OCI-LY7 (cell line): ENCODE measurements at regions of chr9 and their contacts with region 1.

Region 1: GRCh38 chr9:78196258-78196657 is 39.6 kb upstream of the CEP78 start:
- DNase-seq: peak; percentile 81
- H3K4me3 ChIP-seq: peak overlapping the region; percentile 53
- H3K27ac ChIP-seq: peak overlapping the region; percentile 95
- H3K4me1 ChIP-seq: peaks cover 58% of the 10 kb centered on the region
- CTCF ChIP-seq: no peak

Region 2: DNA sequence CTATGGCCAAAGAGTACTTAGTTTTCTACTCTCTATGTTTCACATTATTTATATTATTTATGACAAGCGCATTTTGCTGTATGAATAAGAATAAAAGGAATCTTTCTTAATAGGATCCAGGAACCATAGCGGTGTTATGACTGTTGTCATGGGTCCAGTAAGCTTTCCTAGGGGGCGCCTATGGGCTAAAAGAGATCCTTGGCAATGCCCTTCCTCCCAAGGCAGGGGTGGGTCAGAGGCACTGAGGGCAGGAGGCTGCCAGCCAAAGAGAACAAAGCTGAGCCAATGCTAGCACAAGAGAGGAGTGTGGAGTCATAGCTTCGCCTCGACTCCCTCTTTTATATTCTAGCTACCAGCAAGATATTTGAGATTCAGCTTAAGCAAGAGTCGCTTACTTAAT is 66.3 kb before region 1 on chr9:
- CTCF ChIA-PET with region 1: no interaction called
- POLR2A ChIA-PET with region 1: interaction called, 3 read pairs
- intact Hi-C with region 1: loop called (anchors 5 kb)
- DNase-seq: peak; percentile 40
- H3K4me3 ChIP-seq: no peak overlapping the region
- H3K27ac ChIP-seq: no peak overlapping the region
- H3K4me1 ChIP-seq: peaks cover 19% of the 10 kb centered on the region
- CTCF ChIP-seq: peak; percentile 73

Region 3: GRCh38 chr9:78171651-78172050 is 24.6 kb before region 1 on chr9:
- CTCF ChIA-PET with region 1: no interaction called
- POLR2A ChIA-PET with region 1: interaction called, 9 read pairs
- intact Hi-C with region 1: loop called (anchors 2 kb)
- DNase-seq: no peak
- H3K4me3 ChIP-seq: no peak overlapping the region
- H3K27ac ChIP-seq: no peak overlapping the region
- H3K4me1 ChIP-seq: no peaks in the 10 kb centered on the region
- CTCF ChIP-seq: no peak

Region 4: GRCh38 chr9:78213712-78214111 is 17.5 kb after region 1 on chr9:
- CTCF ChIA-PET with region 1: interaction called, 7 read pairs
- POLR2A ChIA-PET with region 1: interaction called, 31 read pairs
- intact Hi-C with region 1: loop called (anchors 2 kb)
- DNase-seq: peak; percentile 57
- H3K4me3 ChIP-seq: no peak overlapping the region
- H3K27ac ChIP-seq: no peak overlapping the region
- H3K4me1 ChIP-seq: peaks cover 54% of the 10 kb centered on the region
- CTCF ChIP-seq: peak; percentile 81

Region 5: DNA sequence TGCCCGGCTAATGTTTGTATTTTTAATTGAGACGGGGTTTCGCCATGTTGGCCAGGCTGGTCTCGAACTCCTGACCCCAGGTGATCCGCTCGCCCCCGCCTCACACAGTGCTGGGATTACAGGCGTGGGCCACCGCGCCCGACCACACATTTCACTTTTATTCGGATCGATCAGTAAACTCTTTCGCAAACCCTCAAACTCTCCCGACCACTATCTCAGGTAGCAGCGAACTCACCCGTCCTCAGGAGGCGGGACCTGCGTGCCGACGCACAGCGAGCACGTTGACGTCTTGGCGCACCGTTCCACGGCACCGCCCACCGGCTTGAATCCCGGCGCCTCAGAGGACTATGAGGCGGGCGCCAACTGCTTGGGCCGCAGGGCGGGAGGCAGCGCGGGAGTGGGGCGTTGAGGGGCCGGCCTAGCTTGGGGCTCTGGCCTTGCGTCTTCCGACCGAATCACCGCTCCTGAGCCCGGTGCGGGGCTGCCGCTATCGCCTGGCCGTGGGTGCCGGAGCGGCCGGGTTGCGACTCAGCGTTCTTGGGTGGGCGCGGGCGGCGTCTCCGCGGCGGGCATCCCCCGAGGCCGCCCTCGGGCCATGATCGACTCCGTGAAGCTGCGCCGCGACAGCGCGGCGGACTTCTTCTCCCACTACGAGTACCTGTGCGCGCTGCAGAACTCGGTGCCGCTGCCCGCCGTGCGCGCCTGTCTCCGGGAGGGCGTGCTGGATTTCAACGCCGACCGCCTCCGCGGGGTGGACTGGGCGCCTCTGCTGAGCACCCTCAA is 39.7 kb after region 1 on chr9 and contains the start of gene CEP78:
- CTCF ChIA-PET with region 1: no interaction called
- POLR2A ChIA-PET with region 1: interaction called, 5 read pairs
- intact Hi-C with region 1: loop called (anchors 1 kb)
- DNase-seq: peak; percentile 95
- H3K4me3 ChIP-seq: peak within 1 kb of the TSS; percentile 83
- H3K27ac ChIP-seq: peak within 1 kb of the TSS; percentile 56
- H3K4me1 ChIP-seq: peaks cover 33% of the 10 kb centered on the region
- CTCF ChIP-seq: no peak
- total RNA-seq, gene CEP78: 59.3 and 65.1 TPM in 2 replicates

Region 6: DNA sequence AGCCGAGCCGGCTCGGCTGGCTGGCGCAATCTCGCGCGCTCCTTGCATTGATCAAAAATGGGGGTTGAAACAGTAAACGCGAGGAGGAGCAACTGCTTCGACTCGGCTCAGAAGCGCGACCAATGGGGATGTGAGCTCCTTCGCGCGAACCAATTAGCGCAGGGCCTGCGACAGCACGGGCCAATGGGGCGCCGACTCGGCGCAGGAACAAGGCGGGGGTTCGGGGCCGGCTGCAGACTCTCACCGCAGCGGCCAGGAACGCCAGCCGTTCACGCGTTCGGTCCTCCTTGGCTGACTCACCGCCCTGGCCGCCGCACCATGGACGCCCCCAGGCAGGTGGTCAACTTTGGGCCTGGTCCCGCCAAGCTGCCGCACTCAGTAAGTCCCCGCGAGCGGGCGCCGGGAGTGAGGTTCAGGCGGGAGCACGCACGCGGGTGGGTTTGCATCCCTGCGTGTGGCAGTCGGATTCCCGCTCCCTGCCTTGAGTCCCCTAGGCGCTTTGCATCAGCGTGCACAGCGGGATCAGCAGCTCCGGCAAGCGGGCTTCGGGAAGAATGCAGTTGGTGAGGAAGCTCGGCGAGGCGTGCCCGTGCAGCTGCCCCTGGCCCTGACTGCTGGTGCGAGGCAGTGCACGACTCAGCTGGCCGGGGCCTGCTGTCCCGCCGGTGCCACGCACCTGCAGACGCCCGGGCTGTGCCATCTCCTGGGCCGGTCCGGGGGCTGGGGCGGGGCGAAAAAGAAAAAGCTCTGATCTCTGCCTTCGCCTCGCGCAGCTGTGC is 100.8 kb after region 1 on chr9 and contains the start of gene PSAT1:
- CTCF ChIA-PET with region 1: no interaction called
- POLR2A ChIA-PET with region 1: interaction called, 16 read pairs
- intact Hi-C with region 1: loop called (anchors 2 kb)
- DNase-seq: peak; percentile 98
- H3K4me3 ChIP-seq: peak within 1 kb of the TSS; percentile 85
- H3K27ac ChIP-seq: peak within 1 kb of the TSS; percentile 84
- H3K4me1 ChIP-seq: peaks cover 22% of the 10 kb centered on the region
- CTCF ChIP-seq: peak; percentile 34; the same call in 1 of the 2 replicates
- total RNA-seq, gene PSAT1: 116 and 125 TPM in 2 replicates

Region 7: DNA sequence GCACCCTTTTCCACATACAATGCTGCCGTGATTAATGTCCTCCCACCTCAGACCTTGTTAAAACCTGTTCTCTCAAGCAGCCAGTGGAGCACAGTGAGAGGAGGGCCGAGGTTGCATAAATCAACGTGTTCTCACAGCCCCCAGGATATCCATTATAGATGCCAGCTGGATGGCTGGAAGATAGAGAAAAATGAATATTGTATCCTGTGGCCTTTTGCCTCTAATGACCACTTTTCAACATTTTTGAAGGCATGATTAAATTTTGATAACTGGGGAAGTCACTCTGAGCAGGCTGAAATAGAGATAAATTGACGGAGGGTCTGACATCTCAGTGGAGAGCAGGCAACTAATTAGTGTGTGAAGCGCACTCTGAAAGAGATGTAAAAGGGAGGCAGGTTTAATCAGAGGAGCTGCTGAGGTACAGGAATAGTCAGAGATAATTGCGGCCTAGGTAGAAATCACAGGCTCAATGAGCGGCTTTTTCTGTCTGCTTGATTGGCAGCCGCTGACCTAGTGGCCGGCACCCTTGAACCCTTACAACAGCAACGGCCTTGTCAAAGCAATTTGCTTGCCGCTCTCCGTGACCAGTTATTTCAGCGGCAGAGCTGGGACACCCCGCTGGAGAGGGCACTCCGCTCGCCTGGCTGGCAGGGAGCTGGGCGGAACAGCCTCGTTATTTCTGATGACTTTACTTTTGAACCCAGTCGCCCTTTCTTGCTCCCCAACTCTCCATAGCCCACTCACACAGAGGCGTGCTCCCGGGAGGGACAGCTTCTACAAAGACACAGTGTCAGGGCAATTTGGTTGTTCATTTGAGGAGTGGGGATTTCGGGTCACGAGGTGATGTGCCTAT is 661.3 kb after region 1 on chr9:
- CTCF ChIA-PET with region 1: no interaction called
- POLR2A ChIA-PET with region 1: no interaction called
- intact Hi-C with region 1: no loop called
- DNase-seq: no peak
- H3K4me3 ChIP-seq: no peak overlapping the region
- H3K27ac ChIP-seq: no peak overlapping the region
- H3K4me1 ChIP-seq: no peaks in the 10 kb centered on the region
- CTCF ChIP-seq: no peak